H1 (cell line): ENCODE measurements at regions of chr7 and their contacts with region 1.

Region 1: DNA sequence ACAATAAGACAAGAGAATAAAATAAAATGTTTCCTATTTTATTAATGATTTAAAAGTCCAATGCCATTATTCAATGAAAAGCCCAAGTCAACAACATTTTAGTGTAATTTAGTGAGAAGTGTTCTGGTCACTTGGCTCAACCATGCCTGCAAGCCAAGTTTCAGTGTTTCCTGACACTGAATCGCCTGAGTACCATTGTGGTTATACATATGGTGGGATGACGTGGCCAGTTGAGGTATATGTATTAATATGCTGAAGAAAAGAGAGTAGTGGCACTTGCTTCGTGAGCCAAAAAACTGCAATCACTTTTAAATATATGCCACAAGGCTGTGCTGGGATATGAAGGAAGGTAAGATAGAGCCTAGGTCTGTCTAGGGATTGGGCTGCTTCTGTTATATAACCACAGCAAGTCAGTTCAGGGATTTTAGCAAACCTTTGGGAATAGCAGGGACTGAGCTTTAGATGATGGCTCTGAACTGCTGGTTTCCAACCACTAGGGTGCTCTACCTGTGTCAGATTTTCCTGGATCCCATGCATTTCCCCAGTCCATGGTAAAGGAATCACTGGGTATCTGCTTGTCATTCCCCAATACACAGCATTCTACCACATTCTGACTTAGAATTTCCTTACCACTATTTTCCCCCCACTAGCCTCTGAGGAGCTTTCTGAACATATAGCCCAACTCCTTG is 214.0 kb upstream of the PRPS1L1 start:
- DNase-seq: no peak
- H3K4me3 ChIP-seq: no peak overlapping the region
- H3K27ac ChIP-seq: no peak overlapping the region
- H3K4me1 ChIP-seq: no peaks in the 10 kb centered on the region
- H3K27me3 ChIP-seq: peaks cover 0 to 4% (median 0%) of the 10 kb centered on the region in 4 experiments; a peak in 3 of 7 replicates
- CTCF ChIP-seq: peak in 2 of 3 experiments; percentile 32 to 61; a peak in 2 of 4 replicates
- EP300 ChIP-seq: no peak
- POLR2A ChIP-seq: no peak
- RAD21 ChIP-seq: peak; percentile 22 to 39; a peak in 3 of 4 replicates

Region 2: DNA sequence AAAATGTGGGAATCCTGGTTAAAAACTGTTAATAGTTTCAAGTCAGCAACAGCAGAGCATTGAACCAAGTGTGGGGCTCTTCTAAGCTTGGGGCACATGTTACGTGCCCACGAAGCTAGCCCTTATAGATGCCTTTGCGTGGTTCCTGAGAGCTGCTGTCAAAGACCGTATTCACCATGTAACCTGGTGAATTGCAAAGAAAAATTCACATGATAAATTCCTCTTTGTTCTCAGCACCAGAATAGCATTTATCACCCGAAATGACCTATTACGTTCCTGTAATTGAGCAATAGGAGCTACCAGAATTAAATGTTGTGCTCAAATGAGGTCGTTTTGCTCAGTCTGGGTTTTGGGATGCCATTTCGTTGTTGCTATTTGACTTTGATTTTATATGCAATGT is 11.4 kb before region 1 on chr7:
- CTCF ChIA-PET with region 1: interaction called, 13 read pairs
- POLR2A ChIA-PET with region 1: no interaction called
- DNase-seq: no peak
- H3K4me3 ChIP-seq: no peak overlapping the region
- H3K27ac ChIP-seq: no peak overlapping the region
- H3K4me1 ChIP-seq: no peaks in the 10 kb centered on the region
- H3K27me3 ChIP-seq: no peaks in the 10 kb centered on the region
- CTCF ChIP-seq: no peak
- EP300 ChIP-seq: no peak
- POLR2A ChIP-seq: no peak
- RAD21 ChIP-seq: no peak

Region 3: GRCh38 chr7:18257711-18258110 is 16.0 kb after region 1 on chr7:
- CTCF ChIA-PET with region 1: interaction called, 43 read pairs
- POLR2A ChIA-PET with region 1: no interaction called
- DNase-seq: no peak
- H3K4me3 ChIP-seq: no peak overlapping the region
- H3K27ac ChIP-seq: no peak overlapping the region
- H3K4me1 ChIP-seq: no peaks in the 10 kb centered on the region
- H3K27me3 ChIP-seq: no peaks in the 10 kb centered on the region
- CTCF ChIP-seq: no peak
- EP300 ChIP-seq: no peak
- POLR2A ChIP-seq: no peak
- RAD21 ChIP-seq: no peak